ENCODE measurements at regions of chr1 and their contacts with region 1.

Region 1: GRCh38 chr1:246566128-246566812 is at the starts of genes CNST and TFB2M:
- DNase-seq: peak; percentile 99
- H3K4me3 ChIP-seq: peak within 1 kb of the TSS; percentile 92
- H3K27ac ChIP-seq: peak within 1 kb of the TSS; percentile 76
- H3K4me1 ChIP-seq: peaks cover 48% of the 10 kb centered on the region
- CTCF ChIP-seq: no peak
- total RNA-seq, gene CNST: 14.6 and 17.1 TPM in 2 replicates
- total RNA-seq, gene TFB2M: 10.7 and 15.0 TPM in 2 replicates

Region 2: DNA sequence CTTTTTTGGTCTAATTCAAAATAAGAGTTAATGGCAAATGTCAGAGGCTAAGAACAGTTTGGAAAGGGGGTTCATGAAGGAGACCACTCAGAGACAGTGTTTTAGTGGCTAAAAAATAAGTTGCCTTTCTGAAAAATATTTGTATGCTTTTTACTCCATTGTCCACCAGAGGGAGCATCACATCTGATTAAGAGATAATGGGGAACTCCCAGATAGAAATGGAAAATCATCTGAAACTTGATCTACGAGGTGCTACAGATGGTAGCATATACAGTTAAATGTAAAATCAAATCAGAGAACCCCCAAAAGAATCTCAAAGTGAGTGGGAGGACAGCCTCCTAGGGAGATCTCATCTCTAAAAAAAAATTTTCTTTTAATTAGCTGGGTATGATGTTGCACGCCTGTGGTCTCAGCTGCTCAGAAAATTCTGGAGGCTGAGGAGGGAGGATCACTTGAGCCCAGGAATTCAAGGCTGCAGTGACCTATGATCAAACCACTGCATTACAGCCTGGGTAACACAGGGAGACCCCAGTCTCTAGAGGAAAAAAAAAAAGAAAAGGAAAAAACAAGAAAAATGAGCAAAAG is 68.8 kb before region 1 on chr1:
- CTCF ChIA-PET with region 1: no interaction called
- POLR2A ChIA-PET with region 1: no interaction called
- intact Hi-C with region 1: loop called (anchors 2 kb)
- DNase-seq: peak; percentile 83
- H3K4me3 ChIP-seq: no peak overlapping the region
- H3K27ac ChIP-seq: no peak overlapping the region
- H3K4me1 ChIP-seq: peaks cover 4% of the 10 kb centered on the region
- CTCF ChIP-seq: peak; percentile 95

Region 3: DNA sequence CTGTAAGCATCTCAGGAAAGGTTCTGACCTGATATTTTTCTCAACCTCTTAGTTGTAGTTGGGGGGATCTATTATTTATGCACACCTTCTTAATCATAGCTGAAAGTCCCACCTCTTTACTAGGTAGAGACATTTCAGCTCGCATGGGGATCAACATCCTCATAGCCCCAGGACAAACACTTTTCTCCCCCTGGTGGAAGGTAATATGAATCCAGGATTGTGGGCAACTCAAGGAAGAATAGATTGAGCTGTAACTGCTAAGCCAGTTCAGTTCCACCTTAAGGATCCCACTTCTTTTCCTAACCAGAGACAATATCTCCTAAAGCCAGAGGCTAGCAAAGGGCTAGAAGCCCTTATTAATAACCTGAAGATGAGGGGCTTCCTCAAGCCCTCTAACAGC is 33.8 kb before region 1 on chr1:
- CTCF ChIA-PET with region 1: no interaction called
- POLR2A ChIA-PET with region 1: no interaction called
- intact Hi-C with region 1: no loop called
- DNase-seq: no peak
- H3K4me3 ChIP-seq: no peak overlapping the region
- H3K27ac ChIP-seq: no peak overlapping the region
- H3K4me1 ChIP-seq: peaks cover 5% of the 10 kb centered on the region
- CTCF ChIP-seq: peak; percentile 31; the same call in 1 of the 2 replicates

Region 4: GRCh38 chr1:246579818-246580217 is 13.5 kb after region 1 on chr1:
- CTCF ChIA-PET with region 1: interaction called, 4 read pairs
- POLR2A ChIA-PET with region 1: interaction called, 13 read pairs
- intact Hi-C with region 1: no loop called
- DNase-seq: peak; percentile 62
- H3K4me3 ChIP-seq: peak overlapping the region; percentile 43
- H3K27ac ChIP-seq: peak overlapping the region; percentile 81
- H3K4me1 ChIP-seq: peaks cover 46% of the 10 kb centered on the region
- CTCF ChIP-seq: no peak

Region 5: DNA sequence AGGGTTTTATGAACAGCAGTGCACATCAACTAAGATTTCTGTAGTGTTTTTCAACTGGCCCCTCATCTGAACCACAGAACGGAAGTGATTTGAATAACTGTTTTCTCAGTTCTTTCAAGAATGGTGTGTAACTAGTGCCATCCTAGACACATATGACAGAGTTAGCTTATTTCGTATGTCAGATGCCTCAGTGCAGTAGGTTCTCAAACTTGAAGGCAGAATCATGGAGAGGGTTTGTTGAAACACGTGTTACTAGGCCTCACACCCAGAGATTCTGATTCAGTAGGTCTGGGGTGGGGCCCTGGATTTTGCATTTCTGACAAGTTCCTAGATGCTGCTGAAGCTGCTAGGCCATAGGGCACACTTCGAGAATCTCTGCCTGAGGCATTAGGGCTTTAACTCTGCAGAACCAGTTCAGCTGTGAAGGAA is 207.0 kb after region 1 on chr1:
- CTCF ChIA-PET with region 1: no interaction called
- POLR2A ChIA-PET with region 1: no interaction called
- intact Hi-C with region 1: loop called (anchors 5 kb)
- DNase-seq: peak; percentile 85
- H3K4me3 ChIP-seq: peak overlapping the region; percentile 47
- H3K27ac ChIP-seq: peak overlapping the region; percentile 93
- H3K4me1 ChIP-seq: peaks cover 50% of the 10 kb centered on the region
- CTCF ChIP-seq: no peak

Region 6: DNA sequence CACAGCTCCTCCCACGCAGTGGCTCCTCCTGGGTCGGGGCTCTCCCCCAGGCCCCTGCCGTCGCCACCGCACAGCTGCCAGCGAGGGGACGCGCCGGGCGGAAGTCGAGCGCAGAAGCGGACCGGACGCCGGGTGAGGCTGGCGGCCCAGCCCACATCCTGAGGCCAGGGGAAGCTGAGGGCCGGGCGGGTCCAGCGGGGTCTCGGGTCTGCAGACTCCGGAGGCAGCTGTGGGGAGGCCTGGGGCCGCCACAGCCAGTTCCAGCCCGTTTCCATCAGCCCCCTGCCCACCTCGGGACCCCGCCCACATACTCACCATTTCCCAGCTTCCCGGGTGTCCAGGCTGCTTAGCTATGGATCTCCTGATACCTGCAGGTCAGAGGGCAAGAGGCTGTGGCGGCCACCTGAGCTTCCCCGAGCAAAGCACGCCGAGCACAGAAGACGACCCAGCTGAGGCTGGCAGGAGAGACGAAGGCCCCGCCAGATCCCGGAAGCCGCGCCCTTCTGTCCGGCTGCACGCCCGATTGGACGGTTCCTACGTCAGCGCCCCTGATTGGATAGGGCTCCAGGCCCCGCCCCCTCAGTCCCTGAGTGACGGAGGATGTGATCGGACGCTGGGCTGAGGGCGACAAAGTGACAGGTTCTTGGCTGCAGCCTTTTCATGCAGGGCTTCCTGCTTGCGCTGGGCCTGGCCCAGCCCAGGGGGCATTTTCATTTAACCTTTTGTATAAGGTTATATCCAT is 644.3 kb after region 1 on chr1:
- CTCF ChIA-PET with region 1: no interaction called
- POLR2A ChIA-PET with region 1: no interaction called
- intact Hi-C with region 1: loop called (anchors 10 kb)
- DNase-seq: peak; percentile 98
- H3K4me3 ChIP-seq: peak overlapping the region; percentile 81
- H3K27ac ChIP-seq: peak overlapping the region; percentile 60
- H3K4me1 ChIP-seq: peaks cover 36% of the 10 kb centered on the region
- CTCF ChIP-seq: no peak